ENCODE measurements at regions of chr10 and their contacts with region 1.

Region 1: DNA sequence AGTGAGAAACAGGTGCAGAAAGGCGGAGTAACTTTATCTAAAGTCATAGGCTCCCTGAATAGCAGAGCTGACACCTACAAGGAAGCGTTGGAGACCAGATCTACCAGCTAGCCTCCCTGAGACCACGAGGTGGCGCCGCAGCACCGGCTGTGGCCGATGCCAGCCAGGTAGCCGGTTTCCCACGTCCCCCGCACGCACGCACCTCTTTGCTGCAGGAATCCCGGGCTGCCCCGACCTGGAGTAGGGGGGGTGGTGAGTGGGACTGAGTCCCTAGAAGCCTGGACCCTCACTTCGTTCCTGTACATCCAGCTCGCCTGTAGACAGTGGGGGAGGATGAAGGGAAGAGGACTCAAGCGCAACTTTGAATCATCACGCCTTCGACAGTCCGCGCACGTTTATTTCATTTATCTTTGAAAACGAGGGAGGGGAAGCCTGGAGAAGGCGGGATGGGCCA is 3.7 kb downstream of the ELOVL3 start:
- DNase-seq: peak; percentile 93

Region 2: GRCh38 chr10:102120142-102120990 is 109.5 kb before region 1 on chr10 and contains the start of gene LDB1:
- CTCF ChIA-PET with region 1: no interaction called
- POLR2A ChIA-PET with region 1: no interaction called
- DNase-seq: peak; percentile 81

Region 3: GRCh38 chr10:102167861-102168260 is 62.0 kb before region 1 on chr10:
- CTCF ChIA-PET with region 1: interaction called, 21 read pairs
- POLR2A ChIA-PET with region 1: interaction called, 3 read pairs
- DNase-seq: no peak

Region 4: GRCh38 chr10:102245101-102245931 is 15.5 kb after region 1 on chr10 and contains the start of gene GBF1:
- CTCF ChIA-PET with region 1: interaction called, 20 read pairs
- POLR2A ChIA-PET with region 1: interaction called, 16 read pairs
- DNase-seq: peak; percentile 98

Region 5: DNA sequence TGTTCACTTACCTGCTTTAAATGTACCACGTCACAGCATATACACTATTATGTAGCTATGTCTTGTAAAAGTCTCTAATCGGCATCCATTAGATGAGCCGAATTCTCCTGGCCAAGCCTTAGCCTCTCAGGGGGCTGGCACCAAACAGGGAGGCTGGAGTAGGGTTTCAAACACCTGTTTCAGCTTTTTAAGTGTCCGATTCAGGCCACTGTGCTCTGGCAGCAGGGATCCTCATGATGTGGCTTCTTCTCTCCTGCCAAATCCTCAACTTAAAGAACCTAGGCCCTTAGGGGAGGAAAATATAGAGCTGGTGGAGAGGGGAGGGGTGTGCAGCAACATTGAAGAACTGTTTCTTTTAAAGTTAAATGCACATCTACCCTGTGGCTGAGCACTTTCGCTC is 97.2 kb after region 1 on chr10:
- CTCF ChIA-PET with region 1: no interaction called
- POLR2A ChIA-PET with region 1: no interaction called
- DNase-seq: no peak

Region 6: GRCh38 chr10:102352066-102352715 is 122.4 kb after region 1 on chr10:
- CTCF ChIA-PET with region 1: interaction called, 169 read pairs
- POLR2A ChIA-PET with region 1: interaction called, 19 read pairs
- DNase-seq: peak; percentile 82

Region 7: GRCh38 chr10:102384053-102384452 is 154.2 kb after region 1 on chr10:
- CTCF ChIA-PET with region 1: interaction called, 17 read pairs
- POLR2A ChIA-PET with region 1: no interaction called
- DNase-seq: peak; percentile 48

Region 8: DNA sequence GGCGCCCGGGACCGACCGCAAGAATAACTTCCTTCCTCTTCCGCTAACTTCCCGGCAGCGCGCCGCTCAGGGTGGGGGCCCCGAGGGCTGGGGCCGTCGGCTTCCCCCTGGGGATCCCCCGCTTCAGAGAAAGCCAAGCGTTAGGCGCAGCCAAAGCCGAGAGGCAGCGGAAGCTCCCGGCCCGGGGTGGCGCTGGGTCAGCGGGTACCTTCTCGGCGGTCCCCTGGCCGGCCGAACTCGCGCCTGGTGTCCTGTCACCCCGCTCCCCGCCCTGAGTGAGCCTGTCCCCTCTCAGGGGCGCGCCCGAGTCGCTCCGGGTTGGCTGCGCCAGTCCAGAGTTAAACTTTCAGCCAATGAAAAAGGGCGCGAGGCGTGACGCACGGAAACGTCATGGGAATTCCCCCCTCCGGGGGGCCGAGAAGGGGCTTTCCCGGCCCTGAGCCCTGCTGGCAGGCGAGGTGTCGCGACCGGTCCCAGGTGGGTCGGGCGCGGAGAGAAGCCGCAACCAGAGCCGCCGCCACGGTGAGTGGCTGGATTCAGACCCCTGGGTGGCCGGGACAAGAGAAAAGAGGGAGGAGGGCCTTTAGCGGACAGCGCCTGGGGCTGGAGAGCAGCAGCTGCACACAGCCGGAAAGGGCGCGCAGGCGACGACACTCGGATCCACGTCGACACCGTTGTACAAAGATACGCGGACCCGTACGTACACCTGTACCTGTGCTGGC is 164.4 kb after region 1 on chr10:
- CTCF ChIA-PET with region 1: interaction called, 19 read pairs
- POLR2A ChIA-PET with region 1: interaction called, 4 read pairs
- DNase-seq: peak; percentile 89

Region 9: DNA sequence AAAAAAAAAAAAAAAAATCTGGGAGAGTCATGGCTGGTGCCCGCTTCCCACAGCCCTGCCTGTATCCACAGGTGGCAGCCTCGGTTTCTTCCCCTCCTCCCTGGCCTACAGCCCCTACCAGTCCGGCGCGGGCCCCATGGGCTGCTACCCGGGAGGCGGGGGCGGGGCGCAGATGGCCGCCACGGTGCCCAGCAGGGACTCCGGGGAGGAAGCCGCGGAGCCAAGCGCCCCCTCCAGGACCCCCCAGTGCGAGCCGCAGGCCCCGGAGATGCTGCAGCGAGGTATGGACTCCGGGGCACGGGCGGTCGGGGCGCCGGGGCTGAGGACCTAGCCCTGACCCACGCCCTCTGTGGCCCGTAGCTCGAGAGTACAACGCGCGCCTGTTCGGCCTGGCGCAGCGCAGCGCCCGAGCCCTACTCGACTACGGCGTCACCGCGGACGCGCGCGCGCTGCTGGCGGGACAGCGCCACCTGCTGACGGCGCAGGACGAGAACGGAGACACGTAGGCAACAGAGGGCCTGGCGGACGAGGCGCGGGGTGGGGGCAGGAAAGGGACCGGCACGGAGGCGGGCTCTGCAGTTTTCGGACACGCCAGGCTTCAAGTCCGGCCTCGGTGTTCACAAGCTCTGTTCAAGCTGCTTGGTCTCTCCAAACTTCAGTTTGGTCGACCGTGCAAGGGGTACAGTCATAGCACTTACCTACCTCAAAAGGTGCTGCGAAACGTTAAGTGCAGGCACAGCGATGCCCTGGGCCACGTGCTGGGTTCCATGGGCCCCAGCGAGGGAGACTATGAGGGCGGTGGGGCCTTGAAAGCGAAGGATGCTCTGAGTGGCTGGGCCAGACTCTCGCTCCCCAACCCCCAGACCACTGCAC is 169.6 kb after region 1 on chr10:
- CTCF ChIA-PET with region 1: interaction called, 19 read pairs
- POLR2A ChIA-PET with region 1: interaction called, 5 read pairs
- DNase-seq: peak; percentile 93

Measured in HEK293T (cell line).